ENCODE measurements at regions of chr11 and their contacts with region 1.

Region 1: GRCh38 chr11:62309991-62310390 is 11.1 kb upstream of the SCGB1D4 start:
- DNase-seq: no peak
- H3K4me3 Mint-ChIP-seq: no peak overlapping the region
- H3K27ac Mint-ChIP-seq: no peak overlapping the region
- H3K4me1 Mint-ChIP-seq: peaks cover 16% of the 10 kb centered on the region
- H3K27me3 Mint-ChIP-seq: peaks cover 58% of the 10 kb centered on the region

Region 2: GRCh38 chr11:62217191-62217748 is 92.7 kb before region 1 on chr11:
- CTCF ChIA-PET with region 1: interaction called, 10 read pairs
- DNase-seq: no peak
- H3K4me3 Mint-ChIP-seq: no peak overlapping the region
- H3K27ac Mint-ChIP-seq: no peak overlapping the region
- H3K4me1 Mint-ChIP-seq: no peaks in the 10 kb centered on the region
- H3K27me3 Mint-ChIP-seq: peaks cover 29% of the 10 kb centered on the region

Measured in activated naive CD4-positive, alpha-beta T cell treated with anti-CD3 and anti-CD28 coated beads, Interleukin-2, amount 10 ng/mL, durations not matched to agents 7 days and 5 days (primary cell).